Activated naive CD4-positive, alpha-beta T cell treated with anti-CD3 and anti-CD28 coated beads for 36 hours (primary cell): ENCODE measurements at regions of chr1 and their contacts with region 1.

Region 1: GRCh38 chr1:197614916-197615692 is 160.2 kb downstream of the DENND1B start:
- DNase-seq: peak; percentile 49
- H3K4me3 Mint-ChIP-seq: no peak overlapping the region
- H3K27ac Mint-ChIP-seq: no peak overlapping the region
- H3K4me1 Mint-ChIP-seq: no peaks in the 10 kb centered on the region
- H3K27me3 Mint-ChIP-seq: no peaks in the 10 kb centered on the region

Region 2: GRCh38 chr1:197526736-197527371 is 88.2 kb before region 1 on chr1:
- CTCF ChIA-PET with region 1: interaction called, 4 read pairs
- intact Hi-C with region 1: loop called (anchors 5 kb)
- DNase-seq: no peak
- H3K4me3 Mint-ChIP-seq: no peak overlapping the region
- H3K27ac Mint-ChIP-seq: no peak overlapping the region
- H3K4me1 Mint-ChIP-seq: no peaks in the 10 kb centered on the region
- H3K27me3 Mint-ChIP-seq: no peaks in the 10 kb centered on the region